Ascending aorta (tissue), 2 donors: ENCODE measurements at regions of chrX and their contacts with region 1.

Region 1: GRCh38 chrX:22135994-22136684 is 104.0 kb downstream of the PHEX start:
- DNase-seq: peak in 1 of 2 donors; percentile 67
- H3K4me3 ChIP-seq: no peak overlapping the region
- H3K27ac ChIP-seq: peak overlapping the region in 1 of 2 donors; percentile 48
- H3K4me1 ChIP-seq: peaks cover 0 to 4% of the 10 kb centered on the region in 2 donors
- H3K27me3 ChIP-seq: no peaks in the 10 kb centered on the region
- CTCF ChIP-seq: peak in 2 of 3 experiments; percentile 64 to 82

Region 2: GRCh38 chrX:21374163-21374993 is 761.8 kb before region 1 on chrX and contains the start of gene CNKSR2:
- intact Hi-C with region 1: no loop called
- DNase-seq: peak in 1 of 2 donors; percentile 63
- H3K4me3 ChIP-seq: peak within 1 kb of the TSS; percentile 54 to 70
- H3K27ac ChIP-seq: peak within 1 kb of the TSS; percentile 28 to 38
- H3K4me1 ChIP-seq: no peaks in the 10 kb centered on the region
- H3K27me3 ChIP-seq: no peaks in the 10 kb centered on the region
- CTCF ChIP-seq: no peak
- total RNA-seq, gene CNKSR2: 0.53 TPM

Region 3: DNA sequence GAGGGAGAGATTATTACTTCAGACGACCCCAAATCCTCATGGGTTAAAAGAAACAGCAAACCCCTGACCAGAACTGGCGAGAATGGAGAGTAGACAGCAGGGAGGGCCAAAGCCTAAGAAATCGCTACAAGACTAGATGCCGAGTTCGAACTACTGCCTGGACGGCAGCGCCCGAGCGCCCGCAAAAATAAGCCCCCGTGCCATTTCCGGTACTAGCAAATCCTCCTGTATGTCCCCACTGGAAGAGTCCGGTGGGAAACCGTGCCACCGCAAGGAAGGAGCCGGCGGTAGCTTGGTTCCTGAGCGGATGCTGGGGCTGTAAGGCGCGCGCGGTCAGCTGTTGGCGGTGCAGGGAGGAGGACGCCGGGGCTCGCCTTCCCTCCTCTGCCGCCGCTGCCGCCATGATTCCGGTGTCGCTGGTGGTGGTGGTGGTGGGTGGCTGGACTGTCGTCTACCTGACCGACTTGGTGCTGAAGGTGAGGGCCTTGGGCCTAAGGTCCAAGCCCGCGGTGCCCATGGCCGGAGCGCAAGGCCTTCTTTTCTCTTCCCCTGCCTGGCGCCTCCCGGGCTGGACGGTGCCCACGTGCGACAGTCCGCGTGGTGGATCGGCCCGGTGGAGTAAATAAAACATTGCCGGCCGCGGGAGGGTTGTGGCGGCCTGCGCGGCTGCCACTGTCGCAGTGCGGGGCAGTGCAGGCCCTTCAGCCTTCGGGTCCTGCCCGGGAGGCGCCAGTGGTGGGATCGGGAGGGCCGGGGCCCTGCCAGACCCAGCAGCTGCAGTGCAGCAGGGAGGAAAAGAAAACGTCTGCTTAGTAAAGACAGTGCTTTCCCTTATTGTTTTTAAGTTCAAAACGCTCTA is 296.6 kb before region 1 on chrX and contains the start of gene MBTPS2:
- intact Hi-C with region 1: loop called (anchors 5 kb)
- DNase-seq: peak; percentile 27 to 89
- H3K4me3 ChIP-seq: peak within 1 kb of the TSS; percentile 63 to 79
- H3K27ac ChIP-seq: peak within 1 kb of the TSS; percentile 76 to 82
- H3K4me1 ChIP-seq: no peaks in the 10 kb centered on the region
- H3K27me3 ChIP-seq: no peaks in the 10 kb centered on the region
- CTCF ChIP-seq: peak in 1 of 3 experiments; percentile 27
- total RNA-seq, gene MBTPS2: 6.2 TPM

Region 4: DNA sequence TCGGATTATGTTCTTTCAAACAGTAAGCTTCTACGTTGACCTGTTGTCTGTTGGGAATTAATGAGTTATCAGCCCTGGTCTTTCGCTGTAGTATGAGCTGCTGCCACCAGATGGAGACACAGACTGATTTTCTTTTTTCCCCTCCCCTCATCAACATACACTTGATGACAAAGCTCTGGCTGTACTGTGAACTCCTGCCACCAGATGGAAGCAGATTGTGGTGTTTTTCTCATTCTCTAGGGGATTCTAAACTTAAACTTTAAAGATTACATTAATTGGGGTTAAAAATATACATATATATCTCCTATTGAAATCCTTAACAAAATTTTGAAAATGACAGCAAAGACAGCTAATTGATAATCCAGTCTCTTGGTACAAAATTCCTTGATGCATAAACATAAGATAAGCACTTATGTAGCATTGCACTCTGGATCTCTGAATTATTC is 150.8 kb before region 1 on chrX:
- intact Hi-C with region 1: loop called (anchors 2 kb)
- DNase-seq: peak in 1 of 2 donors; percentile 81
- H3K4me3 ChIP-seq: no peak overlapping the region
- H3K27ac ChIP-seq: no peak overlapping the region
- H3K4me1 ChIP-seq: no peaks in the 10 kb centered on the region
- H3K27me3 ChIP-seq: no peaks in the 10 kb centered on the region
- CTCF ChIP-seq: peak; percentile 81 to 84 (median 83)

Region 5: GRCh38 chrX:22192417-22193060 is 56.4 kb after region 1 on chrX:
- intact Hi-C with region 1: loop called (anchors 2 kb)
- DNase-seq: peak in 1 of 2 donors; percentile 73
- H3K4me3 ChIP-seq: no peak overlapping the region
- H3K27ac ChIP-seq: no peak overlapping the region
- H3K4me1 ChIP-seq: no peaks in the 10 kb centered on the region
- H3K27me3 ChIP-seq: no peaks in the 10 kb centered on the region
- CTCF ChIP-seq: peak; percentile 56 to 74 (median 68)

Region 6: GRCh38 chrX:22748093-22748999 is 612.2 kb after region 1 on chrX:
- intact Hi-C with region 1: loop called (anchors 2 kb)
- DNase-seq: no peak
- H3K4me3 ChIP-seq: no peak overlapping the region
- H3K27ac ChIP-seq: no peak overlapping the region
- H3K4me1 ChIP-seq: no peaks in the 10 kb centered on the region
- H3K27me3 ChIP-seq: no peaks in the 10 kb centered on the region
- CTCF ChIP-seq: peak; percentile 11 to 64 (median 51)